ENCODE measurements at regions of chr5 and their contacts with region 1.

Region 1: GRCh38 chr5:170333161-170333910 is 35.8 kb upstream of the LCP2 start:
- DNase-seq: peak; percentile 79
- ATAC-seq: peak; percentile 33
- H3K4me3 Mint-ChIP-seq: peak overlapping the region; percentile 44
- H3K27ac Mint-ChIP-seq: no peak overlapping the region
- H3K4me1 Mint-ChIP-seq: peaks cover 77% of the 10 kb centered on the region
- H3K27me3 Mint-ChIP-seq: no peaks in the 10 kb centered on the region

Region 2: DNA sequence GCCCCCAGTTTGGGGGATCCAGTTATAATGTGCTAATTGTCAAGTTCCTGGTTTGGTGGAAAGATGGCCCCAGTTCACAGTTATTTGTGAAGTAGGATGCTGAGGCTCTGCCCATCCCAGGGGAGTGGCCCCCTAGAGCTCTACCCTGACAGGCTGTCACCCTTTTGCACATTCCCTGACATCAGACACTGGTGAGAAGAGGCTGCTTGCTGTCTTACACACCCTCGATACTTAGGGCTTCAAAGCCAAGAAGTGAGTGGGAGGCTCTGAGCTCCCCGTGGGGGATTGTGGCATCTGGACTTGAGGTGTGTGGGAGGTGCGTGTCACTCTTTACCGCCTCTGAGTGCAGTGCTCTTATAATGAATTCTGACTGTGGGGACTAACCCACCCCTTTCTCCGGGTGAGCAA is 527.8 kb before region 1 on chr5:
- CTCF ChIA-PET with region 1: no interaction called
- POLR2A ChIA-PET with region 1: no interaction called
- intact Hi-C with region 1: loop called in 1 of 2 experiments (anchors 5 kb)
- DNase-seq: peak; percentile 82
- ATAC-seq: peak; percentile 90
- H3K4me3 Mint-ChIP-seq: peak overlapping the region; percentile 38
- H3K27ac Mint-ChIP-seq: peak overlapping the region; percentile 98
- H3K4me1 Mint-ChIP-seq: peaks cover 51% of the 10 kb centered on the region
- H3K27me3 Mint-ChIP-seq: no peaks in the 10 kb centered on the region

Region 3: GRCh38 chr5:170253844-170254455 is 79.4 kb before region 1 on chr5:
- CTCF ChIA-PET with region 1: interaction called, 9 read pairs
- POLR2A ChIA-PET with region 1: no interaction called
- intact Hi-C with region 1: loop called in 1 of 2 experiments (anchors 1 kb)
- DNase-seq: peak; percentile 78
- ATAC-seq: peak; percentile 96
- H3K4me3 Mint-ChIP-seq: no peak overlapping the region
- H3K27ac Mint-ChIP-seq: peak overlapping the region; percentile 45
- H3K4me1 Mint-ChIP-seq: peaks cover 52% of the 10 kb centered on the region
- H3K27me3 Mint-ChIP-seq: no peaks in the 10 kb centered on the region

Region 4: GRCh38 chr5:170278611-170279452 is 54.5 kb before region 1 on chr5:
- CTCF ChIA-PET with region 1: interaction called, 71 read pairs
- POLR2A ChIA-PET with region 1: interaction called, 15 read pairs
- intact Hi-C with region 1: loop called (anchors 1 kb)
- DNase-seq: peak; percentile 93
- ATAC-seq: peak; percentile 73
- H3K4me3 Mint-ChIP-seq: peak overlapping the region; percentile 48
- H3K27ac Mint-ChIP-seq: peak overlapping the region; percentile 90
- H3K4me1 Mint-ChIP-seq: peaks cover 97% of the 10 kb centered on the region
- H3K27me3 Mint-ChIP-seq: no peaks in the 10 kb centered on the region

Region 5: DNA sequence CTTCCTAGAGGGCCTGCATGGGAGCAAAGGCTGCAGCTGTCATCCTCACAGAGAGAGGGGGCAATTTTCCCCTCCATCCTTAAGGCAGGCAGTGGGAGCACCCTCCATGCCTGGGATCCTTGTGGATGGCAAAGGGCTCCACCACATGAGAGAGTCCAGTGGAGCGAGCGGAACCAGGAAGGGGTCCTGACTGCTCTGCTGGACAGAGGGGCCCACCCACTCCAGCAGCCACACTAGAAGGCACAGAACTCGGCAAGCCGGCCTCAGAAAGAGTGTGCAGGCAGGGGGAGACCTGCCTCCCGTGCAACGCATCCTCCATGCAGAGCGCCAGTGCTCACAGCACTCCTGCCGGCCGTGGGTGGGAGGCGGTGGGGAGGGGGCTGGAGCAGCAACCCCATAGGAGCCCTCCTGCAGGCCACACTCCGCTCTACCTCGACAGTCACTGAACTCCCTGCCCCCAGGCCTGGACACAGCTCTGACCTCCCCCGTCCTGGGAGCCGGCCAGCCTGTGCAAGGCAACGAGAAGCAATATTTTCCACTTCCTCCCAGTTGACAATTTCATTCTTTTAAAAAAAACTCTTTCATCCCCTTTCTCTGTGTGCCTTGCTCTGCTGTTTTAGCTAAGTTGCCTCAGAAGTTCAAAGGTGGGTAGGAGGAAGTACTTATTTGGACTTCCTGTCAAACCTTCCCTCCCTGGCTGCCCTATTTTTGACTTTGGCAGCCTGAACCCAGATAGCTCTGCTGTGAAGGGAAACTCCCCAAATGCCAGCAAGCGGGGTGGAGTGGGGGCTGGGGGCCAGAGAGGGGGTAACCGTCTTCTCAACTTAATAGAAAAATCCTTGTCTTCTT is 30.5 kb before region 1 on chr5:
- CTCF ChIA-PET with region 1: interaction called, 85 read pairs
- POLR2A ChIA-PET with region 1: interaction called, 23 read pairs
- intact Hi-C with region 1: loop called (anchors 1 kb)
- DNase-seq: peak; percentile 75
- ATAC-seq: peak; percentile 87
- H3K4me3 Mint-ChIP-seq: peak overlapping the region; percentile 70
- H3K27ac Mint-ChIP-seq: peak overlapping the region; percentile 92
- H3K4me1 Mint-ChIP-seq: peaks cover 91% of the 10 kb centered on the region
- H3K27me3 Mint-ChIP-seq: no peaks in the 10 kb centered on the region

Region 6: GRCh38 chr5:170319301-170319700 is 14.0 kb before region 1 on chr5:
- CTCF ChIA-PET with region 1: interaction called, 35 read pairs
- POLR2A ChIA-PET with region 1: interaction called, 52 read pairs
- intact Hi-C with region 1: no loop called
- DNase-seq: peak; percentile 45
- ATAC-seq: peak; percentile 75
- H3K4me3 Mint-ChIP-seq: no peak overlapping the region
- H3K27ac Mint-ChIP-seq: peak overlapping the region; percentile 63
- H3K4me1 Mint-ChIP-seq: peaks cover 40% of the 10 kb centered on the region
- H3K27me3 Mint-ChIP-seq: no peaks in the 10 kb centered on the region

Region 7: GRCh38 chr5:170937914-170938313 is 604.6 kb after region 1 on chr5:
- CTCF ChIA-PET with region 1: no interaction called
- POLR2A ChIA-PET with region 1: no interaction called
- intact Hi-C with region 1: no loop called
- DNase-seq: no peak
- ATAC-seq: no peak
- H3K4me3 Mint-ChIP-seq: no peak overlapping the region
- H3K27ac Mint-ChIP-seq: no peak overlapping the region
- H3K4me1 Mint-ChIP-seq: no peaks in the 10 kb centered on the region
- H3K27me3 Mint-ChIP-seq: peaks cover 6% of the 10 kb centered on the region

Region 8: GRCh38 chr5:171387345-171387969 is 1054.1 kb after region 1 on chr5 and contains the start of gene NPM1:
- CTCF ChIA-PET with region 1: no interaction called
- POLR2A ChIA-PET with region 1: no interaction called
- intact Hi-C with region 1: loop called in 1 of 2 experiments (anchors 5 kb)
- DNase-seq: peak; percentile 99
- ATAC-seq: peak; percentile 83
- H3K4me3 Mint-ChIP-seq: peak within 1 kb of the TSS; percentile 88
- H3K27ac Mint-ChIP-seq: peak within 1 kb of the TSS; percentile 99
- H3K4me1 Mint-ChIP-seq: peaks cover 37% of the 10 kb centered on the region
- H3K27me3 Mint-ChIP-seq: no peaks in the 10 kb centered on the region
- total RNA-seq, gene NPM1: 3,156 to 3,905 TPM